CD4-positive, alpha-beta T cell (primary cell): ENCODE measurements at regions of chr3 and their contacts with region 1.

Region 1: DNA sequence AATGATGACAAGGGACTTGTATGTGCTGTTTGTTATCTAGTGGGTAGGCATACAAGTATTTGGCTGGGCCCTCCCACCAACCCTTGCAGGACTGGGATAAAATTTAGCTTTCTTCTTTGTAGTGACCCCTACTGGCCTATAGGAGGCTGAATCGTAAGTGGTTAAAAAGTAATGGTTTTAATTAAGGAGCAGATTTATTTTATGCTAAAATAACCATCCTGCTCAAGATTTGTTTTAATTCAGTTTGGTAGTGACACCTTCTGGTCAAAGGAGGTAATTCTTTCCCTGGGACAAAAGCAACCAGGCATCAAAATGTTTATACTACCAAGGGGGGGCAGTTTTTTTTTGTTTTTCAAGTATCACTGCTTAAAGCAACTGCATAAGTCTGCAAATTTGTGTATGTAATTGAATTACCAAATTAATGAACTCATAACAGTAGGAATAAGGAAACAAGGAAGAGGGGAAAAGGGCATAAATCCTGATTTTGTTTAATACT is 70.7 kb downstream of the TOP2B start:
- DNase-seq: peak in 3 of 14 experiments; percentile 43 to 55 (median 54)
- ATAC-seq: peak; percentile 58
- H3K4me3 ChIP-seq: no peak overlapping the region
- H3K4me3 Mint-ChIP-seq: no peak overlapping the region
- H3K27ac ChIP-seq: no peak overlapping the region
- H3K27ac Mint-ChIP-seq: peak overlapping the region; percentile 48
- H3K4me1 ChIP-seq: no peaks in the 10 kb centered on the region
- H3K4me1 Mint-ChIP-seq: peaks cover 4% of the 10 kb centered on the region
- H3K27me3 ChIP-seq: no peaks in the 10 kb centered on the region
- H3K27me3 Mint-ChIP-seq: no peaks in the 10 kb centered on the region
- CTCF ChIP-seq: peak; percentile 73

Region 2: GRCh38 chr3:23894254-23895061 is 1699.6 kb before region 1 on chr3:
- CTCF ChIA-PET with region 1: no interaction called
- POLR2A ChIA-PET with region 1: no interaction called
- intact Hi-C with region 1: loop called in 1 of 2 experiments (anchors 5 kb)
- DNase-seq: no peak
- ATAC-seq: no peak
- H3K4me3 ChIP-seq: no peak overlapping the region
- H3K4me3 Mint-ChIP-seq: no peak overlapping the region
- H3K27ac ChIP-seq: no peak overlapping the region
- H3K27ac Mint-ChIP-seq: peak overlapping the region; percentile 0
- H3K4me1 ChIP-seq: no peaks in the 10 kb centered on the region
- H3K4me1 Mint-ChIP-seq: peaks cover 4% of the 10 kb centered on the region
- H3K27me3 ChIP-seq: no peaks in the 10 kb centered on the region
- H3K27me3 Mint-ChIP-seq: no peaks in the 10 kb centered on the region
- CTCF ChIP-seq: no peak

Region 3: GRCh38 chr3:23999012-23999641 is 1594.9 kb before region 1 on chr3:
- CTCF ChIA-PET with region 1: no interaction called
- POLR2A ChIA-PET with region 1: no interaction called
- intact Hi-C with region 1: loop called in 1 of 2 experiments (anchors 10 kb)
- DNase-seq: peak; percentile 21 to 64 (median 49)
- ATAC-seq: peak; percentile 43
- H3K4me3 ChIP-seq: no peak overlapping the region
- H3K4me3 Mint-ChIP-seq: no peak overlapping the region
- H3K27ac ChIP-seq: no peak overlapping the region
- H3K27ac Mint-ChIP-seq: no peak overlapping the region
- H3K4me1 ChIP-seq: no peaks in the 10 kb centered on the region
- H3K4me1 Mint-ChIP-seq: no peaks in the 10 kb centered on the region
- H3K27me3 ChIP-seq: no peaks in the 10 kb centered on the region
- H3K27me3 Mint-ChIP-seq: no peaks in the 10 kb centered on the region
- CTCF ChIP-seq: peak; percentile 85

Region 4: GRCh38 chr3:24264748-24265158 is 1329.3 kb before region 1 on chr3:
- CTCF ChIA-PET with region 1: no interaction called
- POLR2A ChIA-PET with region 1: no interaction called
- intact Hi-C with region 1: loop called in 1 of 2 experiments (anchors 10 kb)
- DNase-seq: peak in 2 of 14 experiments; percentile 16 to 27
- ATAC-seq: no peak
- H3K4me3 ChIP-seq: no peak overlapping the region
- H3K4me3 Mint-ChIP-seq: no peak overlapping the region
- H3K27ac ChIP-seq: no peak overlapping the region
- H3K27ac Mint-ChIP-seq: no peak overlapping the region
- H3K4me1 ChIP-seq: no peaks in the 10 kb centered on the region
- H3K4me1 Mint-ChIP-seq: no peaks in the 10 kb centered on the region
- H3K27me3 ChIP-seq: no peaks in the 10 kb centered on the region
- H3K27me3 Mint-ChIP-seq: peaks cover 15% of the 10 kb centered on the region
- CTCF ChIP-seq: peak; percentile 23

Region 5: DNA sequence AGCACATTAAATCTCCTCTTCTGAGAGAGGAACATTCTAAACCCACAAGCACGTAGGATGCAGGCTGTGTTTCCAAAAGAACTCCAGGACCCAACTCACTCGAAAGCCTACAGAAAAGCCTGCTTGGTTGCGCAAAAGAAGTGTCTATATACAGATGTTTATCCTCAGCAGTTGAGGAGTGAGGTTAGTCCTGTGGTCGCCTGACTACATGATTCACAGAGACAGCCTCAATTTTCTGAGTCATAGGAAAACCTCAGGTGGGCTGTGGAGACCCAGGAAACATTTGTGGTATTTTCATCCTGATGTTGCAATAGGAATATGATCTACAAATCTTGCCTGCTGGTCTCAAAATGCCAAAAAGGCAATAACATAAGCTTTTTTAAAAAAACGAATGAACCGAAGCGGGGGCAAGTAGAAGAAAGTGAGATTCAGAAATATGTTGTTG is 915.6 kb before region 1 on chr3:
- CTCF ChIA-PET with region 1: no interaction called
- POLR2A ChIA-PET with region 1: no interaction called
- intact Hi-C with region 1: loop called in 1 of 2 experiments (anchors 5 kb)
- DNase-seq: peak in 3 of 14 experiments; percentile 3 to 26 (median 13)
- ATAC-seq: no peak
- H3K4me3 ChIP-seq: no peak overlapping the region
- H3K4me3 Mint-ChIP-seq: no peak overlapping the region
- H3K27ac ChIP-seq: no peak overlapping the region
- H3K27ac Mint-ChIP-seq: no peak overlapping the region
- H3K4me1 ChIP-seq: no peaks in the 10 kb centered on the region
- H3K4me1 Mint-ChIP-seq: no peaks in the 10 kb centered on the region
- H3K27me3 ChIP-seq: no peaks in the 10 kb centered on the region
- H3K27me3 Mint-ChIP-seq: peaks cover 11% of the 10 kb centered on the region
- CTCF ChIP-seq: no peak

Region 6: GRCh38 chr3:25293731-25294130 is 300.3 kb before region 1 on chr3:
- CTCF ChIA-PET with region 1: no interaction called
- POLR2A ChIA-PET with region 1: no interaction called
- intact Hi-C with region 1: no loop called
- DNase-seq: no peak
- ATAC-seq: no peak
- H3K4me3 ChIP-seq: no peak overlapping the region
- H3K4me3 Mint-ChIP-seq: no peak overlapping the region
- H3K27ac ChIP-seq: no peak overlapping the region
- H3K27ac Mint-ChIP-seq: no peak overlapping the region
- H3K4me1 ChIP-seq: no peaks in the 10 kb centered on the region
- H3K4me1 Mint-ChIP-seq: no peaks in the 10 kb centered on the region
- H3K27me3 ChIP-seq: no peaks in the 10 kb centered on the region
- H3K27me3 Mint-ChIP-seq: no peaks in the 10 kb centered on the region
- CTCF ChIP-seq: no peak

Region 7: DNA sequence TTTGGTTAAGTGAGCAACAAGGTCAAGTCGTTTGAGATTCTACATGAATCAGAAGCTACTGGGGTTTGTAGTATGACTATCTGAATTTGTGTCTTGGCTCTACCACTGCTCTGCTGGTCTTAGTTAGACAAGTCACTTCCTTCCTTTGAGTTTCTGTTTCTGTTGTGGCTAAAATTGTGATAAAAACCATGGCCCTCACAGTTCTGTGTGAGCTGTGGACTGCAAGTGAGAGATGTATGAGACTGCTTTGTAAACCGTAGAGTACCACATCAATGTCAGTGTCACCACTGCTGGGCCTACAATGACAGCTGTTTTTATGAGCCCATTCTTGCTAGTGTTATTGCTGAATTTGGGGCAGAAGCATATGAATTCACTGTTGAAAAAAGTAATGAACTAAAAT is 133.3 kb before region 1 on chr3:
- CTCF ChIA-PET with region 1: no interaction called
- POLR2A ChIA-PET with region 1: no interaction called
- intact Hi-C with region 1: no loop called
- DNase-seq: peak in 1 of 14 experiments; percentile 43
- ATAC-seq: no peak
- H3K4me3 ChIP-seq: no peak overlapping the region
- H3K4me3 Mint-ChIP-seq: no peak overlapping the region
- H3K27ac ChIP-seq: no peak overlapping the region
- H3K27ac Mint-ChIP-seq: no peak overlapping the region
- H3K4me1 ChIP-seq: no peaks in the 10 kb centered on the region
- H3K4me1 Mint-ChIP-seq: no peaks in the 10 kb centered on the region
- H3K27me3 ChIP-seq: no peaks in the 10 kb centered on the region
- H3K27me3 Mint-ChIP-seq: no peaks in the 10 kb centered on the region
- CTCF ChIP-seq: no peak